ENCODE measurements at regions of chr2 and their contacts with region 1.

Region 1: GRCh38 chr2:205612636-205613035 is 69.7 kb upstream of the NRP2 start:
- DNase-seq: peak; percentile 75
- H3K4me3 Mint-ChIP-seq: no peak overlapping the region
- H3K27ac Mint-ChIP-seq: peak overlapping the region; percentile 29
- H3K4me1 Mint-ChIP-seq: peaks cover 21% of the 10 kb centered on the region
- H3K27me3 Mint-ChIP-seq: peaks cover 14% of the 10 kb centered on the region

Region 2: GRCh38 chr2:204931562-204931961 is 681.1 kb before region 1 on chr2:
- CTCF ChIA-PET with region 1: no interaction called
- POLR2A ChIA-PET with region 1: no interaction called
- intact Hi-C with region 1: no loop called
- DNase-seq: no peak
- H3K4me3 Mint-ChIP-seq: no peak overlapping the region
- H3K27ac Mint-ChIP-seq: no peak overlapping the region
- H3K4me1 Mint-ChIP-seq: peaks cover 3% of the 10 kb centered on the region
- H3K27me3 Mint-ChIP-seq: no peaks in the 10 kb centered on the region

Region 3: DNA sequence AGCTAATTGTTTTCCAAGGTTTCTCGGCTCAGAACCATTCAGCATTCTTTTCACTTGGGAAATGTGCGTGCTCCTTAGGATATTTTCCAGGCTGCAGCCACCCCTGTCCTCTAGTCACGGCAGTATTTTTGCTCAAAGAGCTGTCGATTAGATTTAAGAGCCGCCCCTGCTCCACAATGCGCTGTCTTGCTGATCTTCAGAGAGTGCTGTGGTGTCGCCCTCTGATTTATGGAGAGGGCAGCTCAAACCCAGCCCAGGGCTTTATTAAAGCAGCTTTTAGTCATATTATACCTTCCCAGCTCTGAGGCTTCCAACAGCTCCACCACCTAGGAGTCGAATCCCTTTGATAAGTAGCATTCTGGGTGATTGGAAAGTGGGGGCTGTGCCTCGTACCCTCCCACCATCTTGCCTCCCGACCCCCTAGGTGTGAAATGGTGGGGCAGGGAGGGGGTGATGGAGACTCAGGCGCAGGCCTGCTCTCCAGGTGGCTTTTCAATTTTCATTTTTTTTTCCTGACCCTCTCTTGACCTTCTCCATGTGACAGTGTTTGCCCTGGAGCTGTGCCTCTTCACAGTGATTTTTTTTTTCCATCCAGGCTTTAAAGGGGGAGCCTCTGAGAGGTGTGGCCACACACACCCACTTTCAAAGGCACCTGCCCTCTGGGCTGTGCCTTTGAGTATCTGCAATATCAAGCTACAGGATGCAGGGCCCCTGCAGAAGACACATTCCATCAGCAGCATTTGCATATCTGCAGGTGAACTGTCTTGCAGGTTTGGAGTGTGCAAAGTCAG is 16.6 kb after region 1 on chr2:
- CTCF ChIA-PET with region 1: no interaction called
- POLR2A ChIA-PET with region 1: no interaction called
- intact Hi-C with region 1: loop called (anchors 2 kb)
- DNase-seq: no peak
- H3K4me3 Mint-ChIP-seq: no peak overlapping the region
- H3K27ac Mint-ChIP-seq: no peak overlapping the region
- H3K4me1 Mint-ChIP-seq: no peaks in the 10 kb centered on the region
- H3K27me3 Mint-ChIP-seq: no peaks in the 10 kb centered on the region

Region 4: GRCh38 chr2:205646680-205647079 is 34.0 kb after region 1 on chr2:
- CTCF ChIA-PET with region 1: no interaction called
- POLR2A ChIA-PET with region 1: no interaction called
- intact Hi-C with region 1: no loop called
- DNase-seq: no peak
- H3K4me3 Mint-ChIP-seq: no peak overlapping the region
- H3K27ac Mint-ChIP-seq: no peak overlapping the region
- H3K4me1 Mint-ChIP-seq: no peaks in the 10 kb centered on the region
- H3K27me3 Mint-ChIP-seq: peaks cover 12% of the 10 kb centered on the region

Region 5: GRCh38 chr2:205660521-205661124 is 48.0 kb after region 1 on chr2:
- CTCF ChIA-PET with region 1: no interaction called
- POLR2A ChIA-PET with region 1: no interaction called
- intact Hi-C with region 1: loop called (anchors 5 kb)
- DNase-seq: peak; percentile 53
- H3K4me3 Mint-ChIP-seq: no peak overlapping the region
- H3K27ac Mint-ChIP-seq: no peak overlapping the region
- H3K4me1 Mint-ChIP-seq: peaks cover 14% of the 10 kb centered on the region
- H3K27me3 Mint-ChIP-seq: peaks cover 6% of the 10 kb centered on the region

Region 6: GRCh38 chr2:205766779-205767359 is 154.2 kb after region 1 on chr2:
- CTCF ChIA-PET with region 1: no interaction called
- POLR2A ChIA-PET with region 1: no interaction called
- intact Hi-C with region 1: no loop called
- DNase-seq: peak; percentile 65
- H3K4me3 Mint-ChIP-seq: no peak overlapping the region
- H3K27ac Mint-ChIP-seq: no peak overlapping the region
- H3K4me1 Mint-ChIP-seq: peaks cover 6% of the 10 kb centered on the region
- H3K27me3 Mint-ChIP-seq: peaks cover 31% of the 10 kb centered on the region

Measured in activated CD4-positive, alpha-beta memory T cell treated with anti-CD3 and anti-CD28 coated beads for 36 hours (primary cell).